Mammary epithelial cell (primary cell): ENCODE measurements at regions of chr10 and their contacts with region 1.

Region 1: DNA sequence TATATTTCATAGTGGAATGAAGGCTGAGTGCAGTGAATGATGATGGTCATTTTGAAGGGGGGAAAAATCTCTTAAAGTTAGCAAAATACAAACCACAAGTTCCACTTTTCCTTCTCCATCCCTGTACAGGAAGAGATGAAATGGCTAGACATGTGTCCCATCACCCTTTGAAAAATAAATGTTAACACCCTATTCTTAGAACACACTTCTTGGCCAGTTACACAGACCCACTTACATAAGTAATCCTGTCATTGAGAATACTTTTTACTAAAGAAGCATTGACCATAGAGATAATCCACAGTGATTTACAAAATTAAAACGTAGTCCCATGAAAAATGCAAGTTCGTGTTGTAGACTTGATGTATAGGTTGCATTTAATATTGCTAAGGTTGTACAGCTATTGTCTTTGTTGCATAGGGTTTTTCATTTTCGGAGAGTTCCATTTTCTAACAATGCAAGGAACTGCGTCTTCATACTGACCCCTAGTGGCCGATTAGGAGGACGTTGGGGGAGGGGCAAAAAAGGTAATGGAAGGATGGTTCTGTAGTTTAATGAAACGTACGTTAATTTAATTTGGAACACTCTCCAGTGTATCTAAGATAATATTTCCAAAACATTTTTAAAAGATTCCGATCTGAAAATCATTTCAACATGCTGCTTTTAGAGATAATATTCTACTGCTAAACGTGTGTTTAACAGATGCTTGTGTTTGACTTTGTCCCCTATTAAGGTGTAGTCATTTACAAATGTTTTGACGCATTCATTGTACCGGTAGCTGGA is 60.9 kb downstream of the ARMC3 start:
- DNase-seq: peak; percentile 44
- H3K4me3 ChIP-seq: no peak overlapping the region
- H3K27ac ChIP-seq: no peak overlapping the region
- H3K4me1 ChIP-seq: no peaks in the 10 kb centered on the region
- H3K27me3 ChIP-seq: peaks cover 2% of the 10 kb centered on the region
- CTCF ChIP-seq: peak; percentile 85 to 91

Region 2: DNA sequence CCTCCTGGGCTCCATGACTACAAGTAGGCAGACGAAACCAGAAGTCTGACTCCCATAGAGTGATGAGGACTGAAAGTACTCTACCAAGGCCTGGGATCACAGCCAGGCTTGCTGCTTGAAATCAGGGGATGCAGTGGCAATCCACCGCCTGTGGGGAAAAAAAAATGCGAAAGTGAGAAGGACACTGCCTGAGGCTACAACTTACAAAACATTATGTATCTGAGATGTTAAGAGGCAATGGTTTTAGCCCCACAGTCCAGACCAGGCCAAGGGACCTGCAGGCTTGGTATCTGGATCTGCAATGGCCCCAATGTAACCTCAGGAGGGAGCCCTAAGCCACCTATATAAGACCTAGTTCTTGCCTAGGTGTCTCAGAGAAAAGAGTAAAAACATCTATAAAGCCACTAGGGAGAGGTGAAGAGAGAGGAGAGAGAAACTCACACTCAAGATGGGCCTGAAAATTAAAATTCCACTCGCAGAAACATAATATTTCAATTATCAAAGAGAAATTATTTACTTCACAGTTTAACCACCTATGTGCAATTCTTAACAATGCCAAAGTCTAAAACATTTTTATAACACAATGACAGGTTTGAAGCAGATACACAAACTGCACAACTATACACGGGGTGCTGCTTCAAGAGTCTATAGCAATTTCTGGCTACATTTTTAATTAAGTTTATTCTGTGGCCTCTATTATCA is 999.2 kb before region 1 on chr10:
- CTCF ChIA-PET with region 1: interaction called, 3 read pairs
- dilution Hi-C with region 1: no loop called
- in situ Hi-C with region 1: no loop called
- intact Hi-C with region 1: loop called (anchors 2 kb)
- DNase-seq: peak; percentile 56
- H3K4me3 ChIP-seq: no peak overlapping the region
- H3K27ac ChIP-seq: no peak overlapping the region
- H3K4me1 ChIP-seq: no peaks in the 10 kb centered on the region
- H3K27me3 ChIP-seq: no peaks in the 10 kb centered on the region
- CTCF ChIP-seq: peak; percentile 52 to 73

Region 3: DNA sequence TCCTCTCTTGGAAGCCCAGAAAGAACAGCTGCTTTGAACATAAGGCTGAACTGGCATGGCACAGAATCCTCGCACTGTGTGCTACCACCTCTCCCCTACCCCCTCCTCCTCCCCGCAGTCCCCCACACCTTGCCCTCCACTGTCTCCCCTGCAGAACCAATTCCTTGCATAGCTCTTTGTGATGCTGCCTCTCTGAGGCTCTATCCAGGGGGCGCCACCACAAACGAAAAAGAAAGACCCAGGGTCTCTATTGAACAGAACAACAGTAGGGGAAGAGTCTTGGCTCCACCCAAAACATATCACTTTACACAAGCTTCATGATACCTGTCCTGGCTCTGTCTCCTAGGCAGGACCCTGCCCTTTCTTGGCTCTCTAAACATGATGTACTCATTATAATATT is 744.8 kb before region 1 on chr10:
- CTCF ChIA-PET with region 1: no interaction called
- dilution Hi-C with region 1: no loop called
- in situ Hi-C with region 1: no loop called
- intact Hi-C with region 1: loop called (anchors 10 kb)
- DNase-seq: no peak
- H3K4me3 ChIP-seq: no peak overlapping the region
- H3K27ac ChIP-seq: no peak overlapping the region
- H3K4me1 ChIP-seq: peaks cover 17% of the 10 kb centered on the region
- H3K27me3 ChIP-seq: no peaks in the 10 kb centered on the region
- CTCF ChIP-seq: no peak

Region 4: DNA sequence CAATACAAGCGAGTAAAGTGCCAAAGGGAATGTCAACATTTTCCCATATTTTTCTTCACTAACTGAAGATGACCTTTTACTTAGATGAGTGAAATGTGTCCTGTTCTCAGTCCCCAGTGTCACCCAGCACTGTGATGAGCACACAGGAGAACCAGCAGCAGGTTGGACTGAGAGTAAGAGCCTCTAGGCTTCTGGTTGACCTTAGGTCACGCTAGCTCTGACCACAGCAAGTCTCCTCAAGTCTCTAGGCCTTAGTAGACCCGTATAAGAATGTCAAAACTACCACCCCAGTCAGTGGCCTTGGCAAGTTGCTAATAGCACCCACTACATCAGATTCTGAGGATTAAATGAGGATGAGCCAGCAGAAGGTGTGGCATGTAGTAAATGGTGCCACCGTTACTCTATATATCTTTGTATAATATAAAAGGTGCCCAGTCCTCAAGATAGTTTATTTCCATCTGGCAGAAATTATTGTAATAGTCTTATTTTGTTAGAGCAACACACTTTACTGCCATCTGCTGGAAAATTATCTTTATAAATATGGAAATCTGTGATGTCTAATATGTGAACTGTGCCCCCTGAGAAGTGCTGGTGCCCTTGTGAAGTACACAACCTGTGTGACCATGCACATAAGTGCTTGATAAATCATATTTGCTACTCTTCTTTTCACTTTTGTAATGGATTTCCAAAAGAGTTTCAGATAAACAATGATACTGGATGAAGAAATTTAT is 567.8 kb before region 1 on chr10:
- CTCF ChIA-PET with region 1: no interaction called
- dilution Hi-C with region 1: no loop called
- in situ Hi-C with region 1: no loop called
- intact Hi-C with region 1: loop called (anchors 1 kb)
- DNase-seq: no peak
- H3K4me3 ChIP-seq: no peak overlapping the region
- H3K27ac ChIP-seq: no peak overlapping the region
- H3K4me1 ChIP-seq: no peaks in the 10 kb centered on the region
- H3K27me3 ChIP-seq: no peaks in the 10 kb centered on the region
- CTCF ChIP-seq: peak in 1 of 2 donors; percentile 29

Region 5: GRCh38 chr10:22550732-22551131 is 438.0 kb before region 1 on chr10:
- CTCF ChIA-PET with region 1: no interaction called
- dilution Hi-C with region 1: loop called (anchors 25 kb)
- in situ Hi-C with region 1: loop called (anchors 10 to 25 kb)
- intact Hi-C with region 1: loop called (anchors 1 kb)
- DNase-seq: no peak
- H3K4me3 ChIP-seq: no peak overlapping the region
- H3K27ac ChIP-seq: no peak overlapping the region
- H3K4me1 ChIP-seq: no peaks in the 10 kb centered on the region
- H3K27me3 ChIP-seq: no peaks in the 10 kb centered on the region
- CTCF ChIP-seq: peak; percentile 39 to 53

Region 6: GRCh38 chr10:22714479-22715289 is 274.1 kb before region 1 on chr10 and contains the start of gene PIP4K2A:
- CTCF ChIA-PET with region 1: no interaction called
- dilution Hi-C with region 1: no loop called
- in situ Hi-C with region 1: no loop called
- intact Hi-C with region 1: loop called (anchors 2 kb)
- DNase-seq: peak; percentile 72
- H3K4me3 ChIP-seq: peak within 1 kb of the TSS; percentile 93 to 97 (median 97)
- H3K27ac ChIP-seq: peak within 1 kb of the TSS; percentile 65
- H3K4me1 ChIP-seq: peaks cover 14% of the 10 kb centered on the region
- H3K27me3 ChIP-seq: no peaks in the 10 kb centered on the region
- CTCF ChIP-seq: no peak
- total RNA-seq, gene PIP4K2A: 7.2 to 13.4 TPM